ENCODE measurements at regions of chr5 and their contacts with region 1.

Region 1: DNA sequence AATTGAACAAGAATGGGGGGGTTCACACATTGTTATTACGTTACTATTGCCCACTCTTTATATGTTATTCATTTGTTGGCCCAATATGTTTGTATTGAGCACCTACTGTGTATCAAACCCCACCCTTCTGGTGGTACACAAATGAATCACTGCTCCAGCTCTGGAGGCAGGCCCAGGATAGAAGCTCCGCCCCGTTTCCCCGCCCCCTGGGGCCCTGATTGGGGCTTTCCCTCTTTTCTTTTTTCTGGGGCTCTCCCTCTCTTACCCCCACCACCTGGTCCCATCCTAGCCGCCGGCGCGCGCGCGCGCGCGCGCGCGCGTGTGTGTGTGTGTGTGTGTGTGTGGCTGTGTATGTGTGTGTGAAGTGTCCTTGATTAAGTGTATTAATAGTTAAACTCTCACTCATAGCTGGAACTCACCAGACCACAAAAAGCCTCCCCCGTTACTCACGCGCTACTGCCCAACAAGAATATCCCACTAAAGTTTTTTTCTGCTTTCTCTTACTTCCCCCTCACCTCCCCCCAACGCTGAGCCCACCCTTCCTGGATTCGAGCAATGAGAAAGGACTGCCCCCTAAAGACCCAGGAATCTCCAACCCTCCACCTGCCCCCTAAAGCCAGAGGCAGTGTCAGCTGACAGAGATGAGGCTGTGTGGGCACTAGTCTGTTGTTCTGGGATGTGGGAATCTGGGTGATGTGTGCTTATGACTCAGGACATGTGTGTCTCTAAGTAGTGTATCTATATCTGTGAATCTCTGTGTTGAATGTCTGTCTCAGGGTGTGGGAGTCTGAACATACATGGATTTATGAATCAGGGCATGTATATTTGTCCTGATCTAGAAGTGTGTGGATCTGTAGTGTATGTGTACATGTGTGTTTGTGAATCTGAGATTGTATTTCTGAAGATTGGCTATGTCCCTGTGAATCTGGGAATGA is 4.0 kb downstream of the CXXC5 start:
- DNase-seq: peak; percentile 88

Region 2: DNA sequence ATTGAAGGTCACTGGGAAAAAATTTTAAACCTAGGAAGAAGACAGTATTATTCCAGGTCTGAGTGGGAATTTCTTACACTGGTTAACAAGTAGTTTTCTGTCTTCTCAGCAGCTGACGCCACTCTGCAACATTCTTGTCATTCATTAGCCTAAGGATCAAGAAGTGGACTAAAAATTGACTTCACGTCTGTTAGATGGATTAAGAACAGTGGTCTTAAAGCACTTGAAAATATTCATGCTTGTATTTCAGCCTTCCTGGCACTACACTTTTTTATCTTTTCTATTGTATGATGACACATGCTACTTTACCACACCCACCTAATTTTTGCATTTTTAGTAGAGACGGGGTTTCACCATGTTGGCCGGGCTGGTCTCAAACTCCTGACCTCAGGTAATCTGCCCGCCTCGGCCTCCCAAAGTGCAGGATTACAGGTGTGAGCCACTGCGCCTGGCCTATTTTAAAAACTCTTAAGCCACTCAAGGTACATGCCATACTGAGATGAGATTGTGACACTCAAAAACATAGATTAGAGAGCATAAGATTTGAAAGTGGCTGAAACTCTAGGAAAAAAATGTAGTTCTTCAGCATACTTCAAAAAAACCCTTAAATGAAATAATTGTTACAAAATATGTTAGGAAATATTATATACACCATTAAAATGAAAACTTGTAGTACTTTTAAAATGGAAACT is 350.2 kb before region 1 on chr5:
- intact Hi-C with region 1: no loop called
- DNase-seq: no peak

Region 3: GRCh38 chr5:139417214-139417613 is 234.9 kb before region 1 on chr5:
- intact Hi-C with region 1: loop called (anchors 5 kb)
- DNase-seq: no peak

Region 4: GRCh38 chr5:139689631-139690063 is 37.5 kb after region 1 on chr5:
- intact Hi-C with region 1: loop called (anchors 5 kb)
- DNase-seq: no peak